Natural killer cell (primary cell): ENCODE measurements at regions of chr20 and their contacts with region 1.

Region 1: GRCh38 chr20:63635431-63636141 is 8.7 kb upstream of the GMEB2 start:
- DNase-seq: peak; percentile 76 to 93
- ATAC-seq: peak; percentile 80 to 90 (median 84)
- H3K4me3 ChIP-seq: no peak overlapping the region
- H3K4me3 Mint-ChIP-seq: peak overlapping the region; percentile 82
- H3K27ac ChIP-seq: peak overlapping the region; percentile 81
- H3K27ac Mint-ChIP-seq: peak overlapping the region; percentile 94
- H3K4me1 ChIP-seq: peaks cover 92% of the 10 kb centered on the region
- H3K4me1 Mint-ChIP-seq: peaks cover 46 to 48% of the 10 kb centered on the region in 2 donors
- H3K27me3 ChIP-seq: no peaks in the 10 kb centered on the region
- H3K27me3 Mint-ChIP-seq: no peaks in the 10 kb centered on the region
- CTCF ChIP-seq: no peak

Region 2: DNA sequence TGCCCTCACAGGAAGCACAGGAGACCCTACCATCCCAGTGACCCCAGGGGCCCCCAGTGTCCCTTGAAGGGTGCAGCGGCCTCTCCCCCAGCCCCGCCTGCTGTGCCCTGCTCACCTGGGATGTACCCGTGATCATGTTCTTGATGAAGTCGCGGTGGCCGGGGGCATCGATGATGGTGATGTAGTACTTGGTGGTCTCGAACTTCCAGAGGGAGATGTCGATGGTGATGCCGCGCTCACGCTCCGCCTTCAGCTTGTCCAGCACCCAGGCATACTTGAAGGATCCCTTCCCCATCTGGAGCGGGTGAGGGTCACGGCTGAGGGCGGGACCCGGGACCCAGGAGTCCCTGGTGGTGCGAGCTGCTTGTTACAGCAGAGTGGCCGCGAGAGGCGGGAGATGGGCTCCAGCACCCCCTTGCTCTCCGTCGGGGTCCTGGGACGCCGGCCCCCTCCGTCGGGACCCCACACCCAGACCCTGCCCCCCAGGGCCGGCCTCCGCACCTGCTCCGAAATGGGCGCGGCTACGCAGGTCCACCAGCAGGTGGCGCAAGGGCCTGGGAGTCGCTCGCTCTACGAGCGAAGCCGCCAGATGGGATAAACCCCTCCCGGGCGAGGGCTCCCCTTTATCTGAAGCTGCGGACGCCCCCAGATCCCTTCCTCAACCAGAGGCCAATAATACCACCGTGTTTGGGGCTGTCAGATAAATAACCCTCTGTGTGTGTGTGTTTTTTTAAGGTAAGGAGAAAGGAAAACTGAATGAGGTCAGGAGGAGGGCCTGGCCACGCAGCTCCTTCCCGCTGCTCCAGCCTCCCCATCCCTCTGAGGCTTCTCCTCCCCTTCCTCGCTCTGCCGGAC is 139.6 kb before region 1 on chr20:
- intact Hi-C with region 1: no loop called
- DNase-seq: peak; percentile 72 to 88
- ATAC-seq: peak; percentile 69 to 78 (median 75)
- H3K4me3 ChIP-seq: no peak overlapping the region
- H3K4me3 Mint-ChIP-seq: peak overlapping the region; percentile 53
- H3K27ac ChIP-seq: no peak overlapping the region
- H3K27ac Mint-ChIP-seq: no peak overlapping the region
- H3K4me1 ChIP-seq: peaks cover 25% of the 10 kb centered on the region
- H3K4me1 Mint-ChIP-seq: no peaks in the 10 kb centered on the region
- H3K27me3 ChIP-seq: peaks cover 37% of the 10 kb centered on the region
- H3K27me3 Mint-ChIP-seq: peaks cover 0 to 5% of the 10 kb centered on the region in 2 donors
- CTCF ChIP-seq: peak; percentile 92

Region 3: GRCh38 chr20:63553227-63553932 is 82.2 kb before region 1 on chr20:
- intact Hi-C with region 1: loop called (anchors 5 kb)
- DNase-seq: peak; percentile 81 to 95
- ATAC-seq: peak; percentile 84 to 95 (median 87)
- H3K4me3 ChIP-seq: peak overlapping the region; percentile 37
- H3K4me3 Mint-ChIP-seq: peak overlapping the region; percentile 47
- H3K27ac ChIP-seq: peak overlapping the region; percentile 70
- H3K27ac Mint-ChIP-seq: peak overlapping the region; percentile 31 to 83
- H3K4me1 ChIP-seq: peaks cover 30% of the 10 kb centered on the region
- H3K4me1 Mint-ChIP-seq: peaks cover 0 to 21% of the 10 kb centered on the region in 2 donors
- H3K27me3 ChIP-seq: peaks cover 2% of the 10 kb centered on the region
- H3K27me3 Mint-ChIP-seq: peaks cover 0 to 3% of the 10 kb centered on the region in 2 donors
- CTCF ChIP-seq: no peak

Region 4: DNA sequence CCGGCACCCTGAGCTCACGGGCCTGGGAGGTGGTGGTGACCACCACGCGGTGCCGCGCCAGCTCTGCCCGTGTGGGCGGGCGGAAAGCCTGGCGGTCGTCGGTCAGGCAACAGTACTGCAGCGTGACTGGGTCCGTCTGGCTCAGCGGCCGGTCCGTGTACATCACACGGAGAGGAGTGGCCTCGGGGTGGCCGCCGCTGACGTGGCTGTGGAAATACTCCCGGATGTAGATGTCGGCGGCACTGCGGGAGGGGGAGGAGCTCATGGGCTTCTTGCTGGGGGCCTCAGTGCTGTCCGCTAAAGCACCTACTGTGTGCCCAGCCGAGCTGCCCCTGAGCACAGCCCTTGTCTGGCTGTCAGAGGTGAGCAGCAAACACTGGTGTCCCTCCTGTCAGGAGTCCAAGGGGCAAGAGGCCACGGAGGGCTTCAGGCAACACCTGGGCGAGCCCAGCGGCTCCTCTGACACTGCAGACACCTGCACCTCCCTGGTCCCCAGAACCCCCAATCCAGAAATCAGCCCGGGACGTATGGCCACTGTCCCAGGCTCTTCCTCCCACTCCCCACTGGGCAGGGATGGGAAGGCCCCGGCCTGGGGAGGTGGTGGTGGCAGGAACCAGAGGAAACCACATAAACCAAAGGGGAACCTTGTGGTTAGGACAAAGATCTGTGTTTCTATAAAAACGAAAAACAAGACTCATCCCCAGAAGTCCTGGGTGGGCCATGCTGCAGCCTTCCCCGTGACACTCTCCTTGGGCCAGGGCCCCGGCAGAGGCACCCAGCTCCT is 68.0 kb before region 1 on chr20:
- intact Hi-C with region 1: loop called (anchors 2 kb)
- DNase-seq: peak; percentile 76 to 82
- ATAC-seq: peak; percentile 80 to 89 (median 81)
- H3K4me3 ChIP-seq: peak overlapping the region; percentile 26
- H3K4me3 Mint-ChIP-seq: peak overlapping the region; percentile 88
- H3K27ac ChIP-seq: peak overlapping the region; percentile 80
- H3K27ac Mint-ChIP-seq: peak overlapping the region; percentile 92 to 93
- H3K4me1 ChIP-seq: peaks cover 39% of the 10 kb centered on the region
- H3K4me1 Mint-ChIP-seq: peaks cover 20 to 26% of the 10 kb centered on the region in 2 donors
- H3K27me3 ChIP-seq: no peaks in the 10 kb centered on the region
- H3K27me3 Mint-ChIP-seq: no peaks in the 10 kb centered on the region
- CTCF ChIP-seq: no peak

Region 5: GRCh38 chr20:63686492-63687321 is 51.1 kb after region 1 on chr20:
- intact Hi-C with region 1: no loop called
- DNase-seq: peak in 1 of 2 donors; percentile 56
- ATAC-seq: peak; percentile 58 to 75 (median 61)
- H3K4me3 ChIP-seq: no peak overlapping the region
- H3K4me3 Mint-ChIP-seq: peak overlapping the region; percentile 37
- H3K27ac ChIP-seq: no peak overlapping the region
- H3K27ac Mint-ChIP-seq: no peak overlapping the region
- H3K4me1 ChIP-seq: peaks cover 24% of the 10 kb centered on the region
- H3K4me1 Mint-ChIP-seq: peaks cover 0 to 5% of the 10 kb centered on the region in 2 donors
- H3K27me3 ChIP-seq: no peaks in the 10 kb centered on the region
- H3K27me3 Mint-ChIP-seq: no peaks in the 10 kb centered on the region
- CTCF ChIP-seq: no peak

Region 6: DNA sequence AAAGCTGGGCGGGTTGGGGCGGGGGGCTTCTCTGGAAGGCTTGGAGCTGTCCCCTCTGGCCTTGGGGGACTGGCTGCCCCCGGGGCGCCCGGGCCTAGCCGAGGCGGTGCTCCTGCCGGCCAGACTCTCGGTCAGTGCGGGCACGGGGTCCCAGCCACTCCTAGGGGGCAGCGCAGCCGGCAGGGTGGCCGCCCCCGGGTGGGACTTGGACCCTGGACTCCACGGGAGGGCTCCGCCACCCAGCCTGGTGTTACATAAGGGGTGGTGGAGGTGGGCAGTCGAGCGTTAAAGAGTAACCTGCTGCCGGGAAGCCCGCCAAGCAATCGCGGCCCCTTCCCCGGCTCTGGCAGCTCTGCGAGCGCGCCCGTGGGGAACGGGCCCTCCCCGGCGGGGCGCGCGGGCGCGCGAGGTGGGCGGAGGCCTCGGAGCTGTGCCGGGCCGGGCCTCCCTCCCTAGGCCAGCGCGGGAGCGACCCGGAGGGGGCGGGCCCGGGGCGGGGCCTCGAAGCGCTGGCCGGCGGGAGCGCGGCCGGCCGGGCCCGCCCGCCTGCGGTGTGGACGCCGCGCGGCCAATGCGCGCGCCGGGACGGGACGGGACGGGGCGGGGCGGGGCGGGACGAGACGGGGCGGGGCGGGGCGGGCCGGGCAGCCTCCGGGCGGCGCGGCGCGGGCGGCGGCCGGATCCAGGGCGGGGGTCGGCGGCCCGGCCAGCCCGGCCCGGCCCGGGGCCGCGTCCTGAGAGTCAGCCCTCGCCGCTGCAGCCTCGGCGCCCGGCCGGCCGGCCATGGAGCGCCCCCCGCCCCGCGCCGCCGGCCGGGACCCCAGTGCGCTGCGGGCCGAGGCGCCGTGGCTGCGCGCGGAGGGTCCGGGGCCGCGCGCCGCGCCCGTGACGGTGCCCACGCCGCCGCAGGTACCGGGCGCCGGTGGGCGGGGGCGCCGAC is 103.8 kb after region 1 on chr20 and contains the start of gene SLC2A4RG:
- intact Hi-C with region 1: loop called (anchors 10 kb)
- DNase-seq: peak; percentile 53 to 86
- ATAC-seq: peak; percentile 33 to 66 (median 58)
- H3K4me3 ChIP-seq: peak within 1 kb of the TSS; percentile 62
- H3K4me3 Mint-ChIP-seq: peak within 1 kb of the TSS; percentile 89
- H3K27ac ChIP-seq: peak within 1 kb of the TSS; percentile 36
- H3K27ac Mint-ChIP-seq: peak within 1 kb of the TSS in 1 of 2 donors; percentile 40
- H3K4me1 ChIP-seq: peaks cover 61% of the 10 kb centered on the region
- H3K4me1 Mint-ChIP-seq: peaks cover 14 to 37% of the 10 kb centered on the region in 2 donors
- H3K27me3 ChIP-seq: no peaks in the 10 kb centered on the region
- H3K27me3 Mint-ChIP-seq: no peaks in the 10 kb centered on the region
- CTCF ChIP-seq: no peak
- total RNA-seq, gene SLC2A4RG: 90.4 to 100 (median 95.5) TPM

Region 7: GRCh38 chr20:63782051-63782471 is 146.5 kb after region 1 on chr20:
- intact Hi-C with region 1: no loop called
- DNase-seq: peak in 1 of 2 donors; percentile 91
- ATAC-seq: peak in 2 of 3 donors; percentile 70 to 77
- H3K4me3 ChIP-seq: no peak overlapping the region
- H3K4me3 Mint-ChIP-seq: no peak overlapping the region
- H3K27ac ChIP-seq: no peak overlapping the region
- H3K27ac Mint-ChIP-seq: no peak overlapping the region
- H3K4me1 ChIP-seq: peaks cover 7% of the 10 kb centered on the region
- H3K4me1 Mint-ChIP-seq: no peaks in the 10 kb centered on the region
- H3K27me3 ChIP-seq: no peaks in the 10 kb centered on the region
- H3K27me3 Mint-ChIP-seq: no peaks in the 10 kb centered on the region
- CTCF ChIP-seq: no peak

Region 8: DNA sequence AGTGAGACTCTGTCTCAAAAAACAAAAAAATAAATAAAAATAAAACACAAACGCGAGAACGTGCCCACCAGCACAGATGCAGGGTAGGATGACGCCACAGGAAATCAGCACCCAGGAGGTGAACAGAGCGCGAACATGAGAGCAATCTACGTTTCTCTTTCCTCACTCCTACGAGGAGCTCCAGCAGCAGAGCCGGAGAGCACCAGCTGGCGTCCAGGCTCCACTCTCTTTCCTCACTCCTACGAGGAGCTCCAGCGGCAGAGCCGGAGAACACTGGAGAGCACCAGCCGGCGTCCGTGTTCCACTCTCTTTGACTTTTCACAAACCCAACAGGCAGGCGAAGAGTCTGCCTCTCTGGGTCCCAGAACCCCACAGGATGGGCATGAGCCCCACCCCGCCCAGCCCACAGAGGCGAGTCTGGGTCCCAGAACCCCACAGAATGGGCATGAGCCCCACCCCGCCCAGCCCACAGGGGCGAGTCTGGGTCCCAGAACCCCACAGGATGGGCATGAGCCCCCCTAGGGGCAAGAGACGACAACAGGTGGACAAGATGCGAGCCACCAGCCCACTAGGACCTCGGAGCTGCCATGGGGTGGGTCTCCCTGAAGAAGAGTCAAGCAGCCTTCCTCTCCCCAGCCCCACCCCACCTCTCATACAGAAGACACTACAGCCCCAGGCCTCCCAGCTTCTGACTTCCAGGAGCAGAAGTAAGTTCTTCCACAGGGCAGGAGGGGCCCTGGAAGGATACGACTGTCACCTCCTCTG is 175.3 kb after region 1 on chr20:
- intact Hi-C with region 1: no loop called
- DNase-seq: no peak
- ATAC-seq: no peak
- H3K4me3 ChIP-seq: no peak overlapping the region
- H3K4me3 Mint-ChIP-seq: no peak overlapping the region
- H3K27ac ChIP-seq: no peak overlapping the region
- H3K27ac Mint-ChIP-seq: no peak overlapping the region
- H3K4me1 ChIP-seq: no peaks in the 10 kb centered on the region
- H3K4me1 Mint-ChIP-seq: no peaks in the 10 kb centered on the region
- H3K27me3 ChIP-seq: no peaks in the 10 kb centered on the region
- H3K27me3 Mint-ChIP-seq: no peaks in the 10 kb centered on the region
- CTCF ChIP-seq: no peak